RWPE1 (cell line): ENCODE measurements at regions of chr17 and their contacts with region 1.

Region 1: GRCh38 chr17:16438557-16439302 is 23.4 kb downstream of the TRPV2 start:
- DNase-seq: peak; percentile 99
- H3K27ac ChIP-seq: peak overlapping the region; percentile 94
- CTCF ChIP-seq: no peak

Region 2: DNA sequence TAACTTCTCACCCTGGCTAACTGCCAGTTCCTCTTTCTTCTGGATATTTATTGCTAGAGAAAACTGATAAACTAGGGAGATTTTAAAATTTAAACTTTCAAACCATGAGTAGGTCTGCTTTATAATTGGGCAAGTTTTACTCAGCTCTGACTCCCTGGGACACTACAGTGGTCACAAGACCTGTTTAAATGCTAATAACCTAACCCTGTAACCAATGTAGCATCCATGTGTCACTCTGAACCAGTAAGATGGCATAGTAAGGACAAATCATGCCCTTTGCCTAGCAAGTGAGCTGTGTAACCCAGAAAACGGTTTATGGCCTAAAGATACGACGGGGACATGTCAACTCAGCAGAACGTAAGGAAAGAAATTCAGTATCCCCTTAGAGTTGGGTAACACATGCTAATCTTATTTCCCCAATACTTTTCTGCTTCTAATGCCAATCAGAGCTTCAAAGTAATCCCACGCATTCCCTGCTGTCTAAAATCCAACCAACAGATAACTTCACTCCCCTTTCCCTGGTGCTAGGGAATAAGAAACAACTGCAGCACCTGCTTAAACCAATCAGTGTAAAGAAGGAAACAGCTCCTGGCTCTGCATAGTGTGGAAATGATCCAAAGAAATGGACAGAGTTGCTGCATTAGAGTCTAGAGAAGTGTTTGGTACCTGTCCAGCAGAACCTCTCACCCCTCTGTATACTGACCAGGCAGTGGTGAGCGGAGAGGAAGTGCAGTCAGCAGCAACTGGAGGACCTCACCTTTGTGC is 309.1 kb before region 1 on chr17:
- CTCF ChIA-PET with region 1: interaction called, 11 read pairs
- POLR2A ChIA-PET with region 1: no interaction called
- DNase-seq: no peak
- H3K27ac ChIP-seq: no peak overlapping the region
- CTCF ChIP-seq: no peak